HEK293 (cell line): ENCODE measurements at regions of chr2 and their contacts with region 1.

Region 1: GRCh38 chr2:127479219-127479825 is 47.0 kb downstream of the IWS1 start:
- H3K4me3 ChIP-seq: no peak overlapping the region
- H3K27ac ChIP-seq: no peak overlapping the region
- H3K4me1 ChIP-seq: no peaks in the 10 kb centered on the region
- CTCF ChIP-seq: peak; percentile 53; the same call in 1 of the 2 replicates

Region 2: GRCh38 chr2:127293748-127294562 is 185.4 kb before region 1 on chr2 and contains the start of gene ERCC3:
- CTCF ChIA-PET with region 1: interaction called, 10 read pairs
- POLR2A ChIA-PET with region 1: interaction called, 5 read pairs
- H3K4me3 ChIP-seq: peak within 1 kb of the TSS; percentile 95
- H3K27ac ChIP-seq: peak within 1 kb of the TSS; percentile 66
- H3K4me1 ChIP-seq: no peaks in the 10 kb centered on the region
- CTCF ChIP-seq: no peak

Region 3: GRCh38 chr2:127324635-127325034 is 154.7 kb before region 1 on chr2:
- CTCF ChIA-PET with region 1: interaction called, 32 read pairs
- POLR2A ChIA-PET with region 1: no interaction called
- H3K4me3 ChIP-seq: no peak overlapping the region
- H3K27ac ChIP-seq: no peak overlapping the region
- H3K4me1 ChIP-seq: no peaks in the 10 kb centered on the region
- CTCF ChIP-seq: no peak

Region 4: DNA sequence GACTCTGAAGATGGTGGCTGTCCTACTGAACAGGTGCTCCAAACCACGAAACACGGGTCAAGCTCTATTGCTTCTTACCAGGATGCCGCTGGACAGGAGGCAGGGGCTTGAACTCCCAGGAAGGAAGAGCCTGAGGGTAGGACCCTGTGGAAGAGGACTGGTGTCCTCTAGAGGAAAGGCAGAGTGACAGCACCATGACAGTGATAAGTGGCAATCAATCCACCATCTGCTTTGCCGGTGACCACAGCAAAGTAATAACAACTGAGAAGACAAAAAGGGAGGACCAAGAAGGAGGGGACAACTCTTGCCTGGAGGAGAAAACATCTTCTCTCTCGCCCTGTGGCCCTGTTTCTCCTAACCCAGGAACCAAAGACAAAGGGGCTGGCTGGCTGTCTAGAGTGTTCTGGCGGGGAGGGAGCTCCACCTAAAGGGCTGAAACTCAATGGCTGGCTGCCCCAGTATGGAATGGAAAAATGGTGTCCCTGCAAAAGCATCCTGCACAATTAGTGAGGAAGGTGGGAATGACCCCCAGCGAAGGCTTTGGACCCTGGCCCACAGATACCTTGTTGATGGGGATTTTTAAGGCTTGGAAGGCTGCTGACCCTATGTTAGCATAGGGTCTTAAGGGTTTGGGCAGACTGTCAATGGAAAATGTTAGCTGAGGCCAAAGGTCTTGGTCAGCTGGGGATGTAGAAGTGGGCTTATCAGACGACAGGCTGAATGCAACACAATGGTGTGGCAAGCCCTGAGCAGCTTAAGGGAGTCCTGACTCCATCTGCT is 25.7 kb before region 1 on chr2:
- CTCF ChIA-PET with region 1: interaction called, 11 read pairs
- POLR2A ChIA-PET with region 1: no interaction called
- H3K4me3 ChIP-seq: no peak overlapping the region
- H3K27ac ChIP-seq: no peak overlapping the region
- H3K4me1 ChIP-seq: no peaks in the 10 kb centered on the region
- CTCF ChIP-seq: peak; percentile 80

Region 5: DNA sequence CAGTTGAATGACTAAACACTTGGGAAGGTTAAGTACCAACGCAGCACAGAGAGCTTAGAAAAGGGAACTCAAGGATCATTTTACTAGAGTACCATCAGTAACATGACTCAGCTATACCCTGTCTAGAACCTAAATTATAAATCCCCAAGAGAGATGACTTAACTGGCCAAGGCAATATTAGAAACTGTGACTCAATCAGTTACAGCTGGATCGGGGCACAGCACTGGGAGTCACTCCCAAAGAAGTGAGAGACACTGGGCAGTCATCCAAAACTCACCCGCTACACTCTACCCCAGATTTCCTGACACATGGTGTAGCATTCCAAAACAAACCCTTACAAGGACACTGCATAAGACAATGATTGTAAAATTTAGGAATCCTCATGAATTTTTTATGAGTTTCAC is 29.3 kb after region 1 on chr2:
- CTCF ChIA-PET with region 1: interaction called, 11 read pairs
- POLR2A ChIA-PET with region 1: no interaction called
- H3K4me3 ChIP-seq: no peak overlapping the region
- H3K27ac ChIP-seq: no peak overlapping the region
- H3K4me1 ChIP-seq: peaks cover 20% of the 10 kb centered on the region
- CTCF ChIP-seq: no peak